ENCODE measurements at regions of chr3 and their contacts with region 1.

Region 1: GRCh38 chr3:49339945-49340800 is at the start of gene USP4:
- DNase-seq: peak; percentile 95
- ATAC-seq: peak; percentile 91
- H3K4me3 Mint-ChIP-seq: peak within 1 kb of the TSS; percentile 96
- H3K27ac Mint-ChIP-seq: peak within 1 kb of the TSS; percentile 95
- H3K4me1 Mint-ChIP-seq: peaks cover 38% of the 10 kb centered on the region
- H3K27me3 Mint-ChIP-seq: no peaks in the 10 kb centered on the region
- total RNA-seq, gene USP4: 79.9 to 84.5 TPM

Region 2: GRCh38 chr3:49171119-49171774 is 168.9 kb before region 1 on chr3 and contains the start of gene KLHDC8B:
- CTCF ChIA-PET with region 1: interaction called, 34 read pairs
- DNase-seq: peak; percentile 88
- ATAC-seq: peak; percentile 90
- H3K4me3 Mint-ChIP-seq: peak within 1 kb of the TSS; percentile 79
- H3K27ac Mint-ChIP-seq: no peak within 1 kb of the TSS
- H3K4me1 Mint-ChIP-seq: peaks cover 22% of the 10 kb centered on the region
- H3K27me3 Mint-ChIP-seq: no peaks in the 10 kb centered on the region
- total RNA-seq, gene KLHDC8B: 0.80 to 1.3 TPM

Region 3: GRCh38 chr3:49358217-49358883 is 18.2 kb after region 1 on chr3 and contains the start of gene GPX1:
- CTCF ChIA-PET with region 1: interaction called, 20 read pairs
- DNase-seq: peak; percentile 91
- ATAC-seq: peak; percentile 91
- H3K4me3 Mint-ChIP-seq: peak within 1 kb of the TSS; percentile 83
- H3K27ac Mint-ChIP-seq: peak within 1 kb of the TSS; percentile 87
- H3K4me1 Mint-ChIP-seq: peaks cover 26% of the 10 kb centered on the region
- H3K27me3 Mint-ChIP-seq: no peaks in the 10 kb centered on the region
- total RNA-seq, gene GPX1: 76.9 to 112 TPM

Region 4: DNA sequence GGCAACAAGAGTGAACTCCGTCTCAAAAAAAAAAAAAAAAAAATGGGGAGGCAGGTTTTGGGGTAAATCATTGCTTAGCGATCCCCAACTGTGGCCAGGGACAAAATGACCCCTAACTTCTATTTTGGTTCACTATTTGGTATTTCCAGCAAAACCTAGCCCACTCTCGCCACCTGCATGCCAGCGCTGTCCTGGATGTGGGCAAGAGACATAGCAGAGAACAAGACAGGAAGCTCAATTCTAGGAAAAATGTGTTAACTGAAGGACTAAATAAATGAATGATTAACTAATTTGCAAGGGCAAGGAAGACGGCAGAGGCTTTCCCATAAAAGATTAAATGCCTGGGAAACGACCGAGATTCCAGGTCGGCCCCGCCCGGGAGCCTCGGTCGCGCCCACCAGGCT is 88.5 kb after region 1 on chr3:
- CTCF ChIA-PET with region 1: interaction called, 11 read pairs
- DNase-seq: no peak
- ATAC-seq: peak; percentile 9
- H3K4me3 Mint-ChIP-seq: peak overlapping the region; percentile 81
- H3K27ac Mint-ChIP-seq: peak overlapping the region; percentile 93
- H3K4me1 Mint-ChIP-seq: peaks cover 30% of the 10 kb centered on the region
- H3K27me3 Mint-ChIP-seq: no peaks in the 10 kb centered on the region

Region 5: GRCh38 chr3:49454458-49454857 is 114.3 kb after region 1 on chr3:
- CTCF ChIA-PET with region 1: interaction called, 62 read pairs
- DNase-seq: no peak
- ATAC-seq: peak; percentile 42
- H3K4me3 Mint-ChIP-seq: no peak overlapping the region
- H3K27ac Mint-ChIP-seq: no peak overlapping the region
- H3K4me1 Mint-ChIP-seq: no peaks in the 10 kb centered on the region
- H3K27me3 Mint-ChIP-seq: no peaks in the 10 kb centered on the region

Measured in activated CD8-positive, alpha-beta memory T cell treated with anti-CD3 and anti-CD28 coated beads, Interleukin-2, amount 10 ng/mL, durations not matched to agents 7 days and 5 days (primary cell).